ENCODE measurements at regions of chr4 and their contacts with region 1.

Region 1: DNA sequence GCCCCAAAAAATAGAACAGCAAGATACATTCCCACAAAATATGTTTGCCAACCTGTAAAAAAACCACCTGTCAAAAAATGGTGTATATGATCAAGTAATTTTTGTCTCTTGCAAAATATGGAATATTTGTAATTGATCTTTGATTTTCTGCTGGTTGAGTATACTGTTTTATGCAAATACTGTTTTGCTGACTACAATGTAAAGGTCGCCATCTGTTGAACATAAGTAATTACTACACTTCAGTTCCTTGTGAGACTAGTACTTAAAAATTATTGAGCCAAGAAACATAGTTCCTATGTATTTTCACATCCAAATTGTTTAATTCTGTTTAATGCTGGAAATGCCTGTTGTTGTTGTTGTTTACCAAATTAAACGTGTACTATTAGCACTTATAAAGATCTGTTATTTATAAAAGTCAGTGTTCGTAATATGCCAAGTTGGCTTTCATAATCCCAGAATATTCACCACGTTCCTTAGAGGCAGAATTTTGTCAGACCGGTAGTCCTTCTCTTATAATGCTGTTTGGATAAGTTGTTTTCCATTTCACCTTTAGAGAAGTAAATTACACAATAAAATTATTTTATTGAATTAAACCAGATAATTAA is 144.2 kb downstream of the PDLIM5 start:
- DNase-seq: no peak
- H3K4me3 ChIP-seq: no peak overlapping the region
- CTCF ChIP-seq: peak in 1 of 3 donors; percentile 42
- POLR2A ChIP-seq: no peak

Region 2: GRCh38 chr4:94406668-94407437 is 189.1 kb before region 1 on chr4:
- intact Hi-C with region 1: loop called (anchors 2 kb)
- DNase-seq: peak; percentile 81 to 91
- H3K4me3 ChIP-seq: no peak overlapping the region
- CTCF ChIP-seq: no peak
- POLR2A ChIP-seq: no peak

Region 3: GRCh38 chr4:94641702-94642560 is 46.0 kb after region 1 on chr4:
- intact Hi-C with region 1: no loop called
- DNase-seq: no peak
- H3K4me3 ChIP-seq: no peak overlapping the region
- CTCF ChIP-seq: no peak
- POLR2A ChIP-seq: no peak

Region 4: GRCh38 chr4:95510145-95510544 is 914.2 kb after region 1 on chr4:
- intact Hi-C with region 1: no loop called
- DNase-seq: no peak
- H3K4me3 ChIP-seq: no peak overlapping the region
- CTCF ChIP-seq: no peak
- POLR2A ChIP-seq: no peak

Measured in lower leg skin (tissue), 4 donors.